Heart right ventricle (tissue), 16 donors: ENCODE measurements at regions of chrX and their contacts with region 1.

Region 1: GRCh38 chrX:154019633-154020528 is at the start of gene IRAK1:
- DNase-seq: peak; percentile 29 to 66
- ATAC-seq: peak; percentile 63 to 94 (median 80)
- H3K4me3 ChIP-seq: peak within 1 kb of the TSS; percentile 38 to 68 (median 60)
- H3K27ac ChIP-seq: peak within 1 kb of the TSS; percentile 79 to 95 (median 88)
- H3K4me1 ChIP-seq: peaks cover 0 to 30% (median 10%) of the 10 kb centered on the region in 9 donors
- H3K27me3 ChIP-seq: peaks cover 0 to 62% (median 0%) of the 10 kb centered on the region in 7 donors
- CTCF ChIP-seq: peak in 1 of 9 donors; percentile 13
- total RNA-seq, gene IRAK1: 18.2 to 59.0 (median 27.1) TPM

Region 2: GRCh38 chrX:153861151-153861550 is 158.7 kb before region 1 on chrX:
- intact Hi-C with region 1: no loop called
- DNase-seq: no peak
- ATAC-seq: no peak
- H3K4me3 ChIP-seq: no peak overlapping the region
- H3K27ac ChIP-seq: no peak overlapping the region
- H3K4me1 ChIP-seq: no peaks in the 10 kb centered on the region
- H3K27me3 ChIP-seq: peaks cover 0 to 62% (median 0%) of the 10 kb centered on the region in 7 donors
- CTCF ChIP-seq: no peak

Region 3: GRCh38 chrX:154046031-154046781 is 26.3 kb after region 1 on chrX:
- intact Hi-C with region 1: loop called in 2 of 10 experiments (anchors 2 to 5 kb)
- DNase-seq: peak; percentile 28 to 43
- ATAC-seq: peak; percentile 60 to 78 (median 72)
- H3K4me3 ChIP-seq: no peak overlapping the region
- H3K27ac ChIP-seq: peak overlapping the region in 8 of 10 donors; percentile 31 to 75 (median 50)
- H3K4me1 ChIP-seq: peaks cover 21 to 97% (median 63%) of the 10 kb centered on the region in 9 donors
- H3K27me3 ChIP-seq: peaks cover 0 to 65% (median 0%) of the 10 kb centered on the region in 7 donors
- CTCF ChIP-seq: peak in 3 of 9 donors; percentile 34 to 44 (median 37)

Region 4: GRCh38 chrX:154051201-154051810 is 31.4 kb after region 1 on chrX:
- intact Hi-C with region 1: loop called in 2 of 10 experiments (anchors 2 to 5 kb)
- DNase-seq: peak; percentile 41 to 69
- ATAC-seq: peak in 5 of 8 donors; percentile 51 to 70 (median 67)
- H3K4me3 ChIP-seq: no peak overlapping the region
- H3K27ac ChIP-seq: no peak overlapping the region
- H3K4me1 ChIP-seq: peaks cover 7 to 57% (median 44%) of the 10 kb centered on the region in 9 donors
- H3K27me3 ChIP-seq: peaks cover 0 to 70% (median 0%) of the 10 kb centered on the region in 7 donors
- CTCF ChIP-seq: peak; percentile 42 to 79 (median 65)

Region 5: DNA sequence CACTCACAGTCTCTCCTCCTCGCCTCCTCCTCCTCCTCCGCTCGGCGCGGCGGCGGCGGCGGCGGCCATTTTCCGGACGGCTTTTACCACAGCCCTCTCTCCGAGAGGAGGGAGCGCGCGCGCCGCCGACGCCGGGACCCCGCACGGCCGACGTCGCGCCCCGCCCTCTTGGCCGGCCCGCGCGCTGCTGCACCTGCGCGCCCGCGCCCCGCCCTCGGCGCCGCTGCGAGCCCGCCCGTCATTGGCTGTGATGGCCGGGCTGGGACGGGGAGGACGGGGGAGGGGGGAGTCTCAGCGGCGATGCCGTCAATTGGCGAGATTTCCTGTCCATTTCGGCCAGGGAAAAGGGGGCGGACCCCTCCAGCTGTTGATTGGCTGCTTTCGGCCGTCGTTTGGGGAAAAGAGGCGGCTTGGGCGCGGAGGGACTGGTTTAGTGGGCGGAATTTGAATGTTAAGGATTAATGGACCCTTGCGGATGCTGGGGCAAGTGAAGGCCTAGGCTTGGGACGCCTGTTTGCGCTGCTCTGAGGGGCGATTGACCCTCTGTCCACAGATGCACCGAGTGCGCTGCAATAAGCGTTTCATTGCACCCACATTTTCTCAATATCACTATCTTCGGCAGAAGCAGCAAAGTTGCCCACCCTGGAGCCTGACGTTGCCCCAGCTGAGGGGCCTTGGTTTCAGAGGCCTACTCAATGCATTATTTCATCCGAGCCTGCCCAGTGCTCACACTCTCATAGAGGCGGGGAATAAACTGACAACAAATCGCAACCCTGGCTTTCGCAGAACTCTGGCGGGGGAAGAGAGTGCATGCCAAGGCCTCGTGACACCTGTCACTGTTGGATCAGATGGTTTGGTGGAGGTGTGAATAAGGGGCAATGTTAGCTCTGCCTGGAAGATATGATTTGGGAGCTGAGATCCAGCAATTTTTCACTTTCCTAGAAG is 78.0 kb after region 1 on chrX and contains the start of gene MECP2:
- intact Hi-C with region 1: loop called in 1 of 10 experiments (anchors 10 kb)
- DNase-seq: peak; percentile 90 to 93
- ATAC-seq: peak; percentile 87 to 94 (median 92)
- H3K4me3 ChIP-seq: peak within 1 kb of the TSS; percentile 44 to 81 (median 72)
- H3K27ac ChIP-seq: peak within 1 kb of the TSS; percentile 92 to 98 (median 96)
- H3K4me1 ChIP-seq: peaks cover 2 to 39% (median 33%) of the 10 kb centered on the region in 9 donors
- H3K27me3 ChIP-seq: peaks cover 0 to 57% (median 0%) of the 10 kb centered on the region in 7 donors
- CTCF ChIP-seq: no peak
- total RNA-seq, gene MECP2: 33.5 to 39.3 (median 37.6) TPM